ENCODE measurements at regions of chr2 and their contacts with region 1.

Region 1: GRCh38 chr2:73071360-73072133 is at the start of gene SFXN5:
- DNase-seq: peak; percentile 97
- H3K4me3 Mint-ChIP-seq: peak within 1 kb of the TSS; percentile 88
- H3K27ac Mint-ChIP-seq: peak within 1 kb of the TSS; percentile 88
- H3K4me1 Mint-ChIP-seq: peaks cover 34% of the 10 kb centered on the region
- H3K27me3 Mint-ChIP-seq: no peaks in the 10 kb centered on the region
- CTCF ChIP-seq: no peak
- total RNA-seq, gene SFXN5: 6.0 and 8.0 TPM in 2 replicates

Region 2: GRCh38 chr2:73043929-73044832 is 27.4 kb before region 1 on chr2:
- CTCF ChIA-PET with region 1: no interaction called
- POLR2A ChIA-PET with region 1: no interaction called
- intact Hi-C with region 1: no loop called
- DNase-seq: no peak
- H3K4me3 Mint-ChIP-seq: no peak overlapping the region
- H3K27ac Mint-ChIP-seq: no peak overlapping the region
- H3K4me1 Mint-ChIP-seq: no peaks in the 10 kb centered on the region
- H3K27me3 Mint-ChIP-seq: no peaks in the 10 kb centered on the region
- CTCF ChIP-seq: no peak

Region 3: GRCh38 chr2:73112913-73113633 is 41.5 kb after region 1 on chr2 and contains the start of gene RAB11FIP5:
- CTCF ChIA-PET with region 1: no interaction called
- POLR2A ChIA-PET with region 1: interaction called, 24 read pairs
- intact Hi-C with region 1: no loop called
- DNase-seq: peak; percentile 75
- H3K4me3 Mint-ChIP-seq: peak within 1 kb of the TSS; percentile 96
- H3K27ac Mint-ChIP-seq: peak within 1 kb of the TSS; percentile 89
- H3K4me1 Mint-ChIP-seq: peaks cover 20% of the 10 kb centered on the region
- H3K27me3 Mint-ChIP-seq: no peaks in the 10 kb centered on the region
- CTCF ChIP-seq: no peak
- total RNA-seq, gene RAB11FIP5: 35.6 and 36.9 TPM in 2 replicates

Region 4: DNA sequence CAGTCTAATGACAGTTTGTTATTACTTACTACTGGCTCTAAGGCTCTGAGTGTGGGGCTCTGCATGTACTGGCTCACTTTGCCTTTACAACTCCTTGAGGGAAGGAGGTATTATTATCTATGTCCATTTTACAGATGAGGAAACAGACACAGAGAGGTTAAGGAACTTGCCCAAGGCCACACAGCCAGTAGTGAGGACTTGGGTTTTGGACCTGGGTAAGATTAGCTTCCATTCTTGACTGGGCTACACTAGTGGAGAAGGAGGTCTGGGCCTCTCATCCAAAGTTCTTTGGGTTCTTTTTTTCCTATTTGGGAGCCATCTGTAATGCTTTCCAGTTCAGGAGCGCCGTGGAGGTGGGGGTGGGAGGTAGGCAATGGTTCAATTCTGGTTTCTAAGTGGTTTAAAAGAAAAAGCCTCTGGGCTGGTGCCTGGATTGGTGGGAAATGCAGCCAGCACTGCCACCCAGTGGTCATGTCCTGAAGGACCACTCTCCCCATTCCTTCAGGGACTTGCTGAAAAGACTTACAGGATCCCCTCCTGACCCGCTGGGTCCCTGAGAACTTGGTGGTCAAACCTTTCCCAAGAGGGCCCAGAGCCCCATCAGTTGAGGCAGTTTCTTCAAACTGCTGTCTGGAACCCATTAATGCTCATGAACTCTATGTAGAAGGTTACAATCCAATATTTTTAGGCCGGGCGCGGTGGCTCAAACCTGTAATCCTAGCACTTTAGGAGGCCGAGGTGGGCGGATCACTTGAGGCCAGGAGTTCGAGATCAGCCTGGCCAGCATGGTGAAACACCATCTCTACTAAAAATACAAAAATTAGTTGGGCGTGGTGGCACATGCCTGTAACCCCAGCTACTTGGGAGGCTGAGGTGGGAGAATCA is 92.2 kb after region 1 on chr2:
- CTCF ChIA-PET with region 1: interaction called, 5 read pairs
- POLR2A ChIA-PET with region 1: no interaction called
- intact Hi-C with region 1: loop called (anchors 5 kb)
- DNase-seq: peak; percentile 72
- H3K4me3 Mint-ChIP-seq: no peak overlapping the region
- H3K27ac Mint-ChIP-seq: no peak overlapping the region
- H3K4me1 Mint-ChIP-seq: no peaks in the 10 kb centered on the region
- H3K27me3 Mint-ChIP-seq: peaks cover under 1% of the 10 kb centered on the region
- CTCF ChIP-seq: peak; percentile 91

Measured in MCF 10A (cell line).